ENCODE measurements at regions of chr17 and their contacts with region 1.

Region 1: DNA sequence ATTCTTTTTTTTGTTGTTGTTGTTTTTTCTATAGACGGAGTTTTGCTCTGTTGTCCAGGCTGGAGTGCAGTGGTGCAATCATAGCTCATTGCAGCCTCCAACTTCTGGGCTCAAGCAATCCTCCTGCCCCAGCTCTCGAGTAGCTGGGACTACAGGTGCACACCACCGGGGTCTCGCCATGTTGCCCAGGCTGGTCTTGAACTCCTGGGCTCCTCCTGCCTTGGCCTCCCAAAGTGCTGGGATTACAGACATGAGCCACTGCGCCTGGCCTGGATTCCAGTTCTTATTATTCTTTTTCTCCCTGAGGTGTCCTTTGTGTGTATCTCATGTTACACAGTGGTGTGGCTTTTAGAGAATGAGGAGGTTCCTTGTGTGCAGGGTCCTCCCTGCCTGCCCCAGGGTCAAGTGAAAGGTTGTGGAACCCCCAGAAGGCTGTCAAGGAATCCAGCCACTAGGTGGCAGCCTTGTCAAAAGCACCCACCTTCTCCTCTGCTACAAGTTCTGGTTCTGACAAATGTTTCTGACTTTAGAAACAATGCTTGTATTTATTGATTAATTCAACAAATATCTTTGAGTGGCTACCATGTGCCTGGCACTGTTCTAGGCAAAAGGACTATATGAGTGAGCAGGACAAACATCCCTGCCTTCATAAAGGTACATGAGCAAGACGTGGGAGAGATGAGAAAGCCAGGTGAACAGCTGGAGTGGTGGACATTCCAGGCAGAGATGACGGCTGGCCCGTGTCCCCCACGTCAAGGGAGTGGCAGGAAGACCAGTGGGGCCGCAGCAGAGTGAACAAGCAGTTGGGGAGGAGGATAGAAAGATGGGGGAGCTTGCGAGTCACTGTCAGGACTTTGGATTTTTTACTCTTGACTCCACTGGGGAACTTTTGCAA is 112.4 kb downstream of the SPECC1 start:
- DNase-seq: peak; percentile 82
- ATAC-seq: peak; percentile 68
- H3K4me3 ChIP-seq: no peak overlapping the region
- H3K4me3 Mint-ChIP-seq: no peak overlapping the region
- H3K27ac ChIP-seq: no peak overlapping the region
- H3K27ac Mint-ChIP-seq: no peak overlapping the region
- H3K4me1 ChIP-seq: no peaks in the 10 kb centered on the region
- H3K4me1 Mint-ChIP-seq: no peaks in the 10 kb centered on the region
- H3K27me3 ChIP-seq: no peaks in the 10 kb centered on the region
- H3K27me3 Mint-ChIP-seq: peaks cover 15% of the 10 kb centered on the region
- CTCF ChIP-seq: peak; percentile 99

Region 2: GRCh38 chr17:20155258-20156195 is 33.9 kb after region 1 on chr17:
- CTCF ChIA-PET with region 1: no interaction called
- POLR2A ChIA-PET with region 1: no interaction called
- intact Hi-C with region 1: loop called (anchors 5 kb)
- DNase-seq: peak; percentile 99
- ATAC-seq: peak; percentile 96
- H3K4me3 ChIP-seq: peak overlapping the region; percentile 8 to 77 (median 72)
- H3K4me3 Mint-ChIP-seq: no peak overlapping the region
- H3K27ac ChIP-seq: peak overlapping the region; percentile 56 to 85
- H3K27ac Mint-ChIP-seq: no peak overlapping the region
- H3K4me1 ChIP-seq: peaks cover 27 to 35% of the 10 kb centered on the region in 2 donors
- H3K4me1 Mint-ChIP-seq: peaks cover 4% of the 10 kb centered on the region
- H3K27me3 ChIP-seq: no peaks in the 10 kb centered on the region
- H3K27me3 Mint-ChIP-seq: no peaks in the 10 kb centered on the region
- CTCF ChIP-seq: no peak

Region 3: GRCh38 chr17:20315821-20316220 is 194.2 kb after region 1 on chr17:
- CTCF ChIA-PET with region 1: interaction called, 34 read pairs
- POLR2A ChIA-PET with region 1: no interaction called
- intact Hi-C with region 1: no loop called
- DNase-seq: no peak
- ATAC-seq: no peak
- H3K4me3 ChIP-seq: no peak overlapping the region
- H3K4me3 Mint-ChIP-seq: no peak overlapping the region
- H3K27ac ChIP-seq: no peak overlapping the region
- H3K27ac Mint-ChIP-seq: no peak overlapping the region
- H3K4me1 ChIP-seq: peaks cover 0 to 2% of the 10 kb centered on the region in 2 donors
- H3K4me1 Mint-ChIP-seq: no peaks in the 10 kb centered on the region
- H3K27me3 ChIP-seq: no peaks in the 10 kb centered on the region
- H3K27me3 Mint-ChIP-seq: no peaks in the 10 kb centered on the region
- CTCF ChIP-seq: no peak

Region 4: GRCh38 chr17:20852239-20852989 is 730.8 kb after region 1 on chr17:
- CTCF ChIA-PET with region 1: no interaction called
- POLR2A ChIA-PET with region 1: no interaction called
- intact Hi-C with region 1: loop called (anchors 2 kb)
- DNase-seq: peak; percentile 48
- ATAC-seq: peak; percentile 56
- H3K4me3 ChIP-seq: peak overlapping the region in 1 of 5 experiments; percentile 1
- H3K4me3 Mint-ChIP-seq: peak overlapping the region; percentile 72
- H3K27ac ChIP-seq: no peak overlapping the region
- H3K27ac Mint-ChIP-seq: no peak overlapping the region
- H3K4me1 ChIP-seq: peaks cover 0 to 4% of the 10 kb centered on the region in 2 donors
- H3K4me1 Mint-ChIP-seq: peaks cover 15% of the 10 kb centered on the region
- H3K27me3 ChIP-seq: peaks cover 0 to 11% (median 1%) of the 10 kb centered on the region in 4 experiments
- H3K27me3 Mint-ChIP-seq: peaks cover 38% of the 10 kb centered on the region
- CTCF ChIP-seq: no peak

Measured in B cell (primary cell).